Naive thymus-derived CD4-positive, alpha-beta T cell (primary cell): ENCODE measurements at regions of chr1 and their contacts with region 1.

Region 1: GRCh38 chr1:18902523-18903290 is at the start of gene ALDH4A1:
- DNase-seq: peak; percentile 73 to 95 (median 93)
- ATAC-seq: peak; percentile 98
- H3K4me3 ChIP-seq: peak within 1 kb of the TSS; percentile 57
- H3K4me3 Mint-ChIP-seq: peak within 1 kb of the TSS; percentile 86 to 99 (median 94)
- H3K27ac ChIP-seq: peak within 1 kb of the TSS; percentile 83
- H3K27ac Mint-ChIP-seq: peak within 1 kb of the TSS; percentile 88 to 98 (median 97)
- H3K4me1 ChIP-seq: peaks cover 3 to 12% of the 10 kb centered on the region in 2 donors
- H3K4me1 Mint-ChIP-seq: peaks cover 22 to 50% (median 41%) of the 10 kb centered on the region in 7 donors
- H3K27me3 ChIP-seq: no peaks in the 10 kb centered on the region
- H3K27me3 Mint-ChIP-seq: no peaks in the 10 kb centered on the region
- total RNA-seq, gene ALDH4A1: 1.3 to 3.2 (median 1.6) TPM

Region 2: GRCh38 chr1:18836654-18837053 is 66.1 kb before region 1 on chr1:
- CTCF ChIA-PET with region 1: no interaction called
- POLR2A ChIA-PET with region 1: no interaction called
- intact Hi-C with region 1: no loop called
- DNase-seq: no peak
- ATAC-seq: no peak
- H3K4me3 ChIP-seq: no peak overlapping the region
- H3K4me3 Mint-ChIP-seq: no peak overlapping the region
- H3K27ac ChIP-seq: no peak overlapping the region
- H3K27ac Mint-ChIP-seq: no peak overlapping the region
- H3K4me1 ChIP-seq: no peaks in the 10 kb centered on the region
- H3K4me1 Mint-ChIP-seq: no peaks in the 10 kb centered on the region
- H3K27me3 ChIP-seq: no peaks in the 10 kb centered on the region
- H3K27me3 Mint-ChIP-seq: peaks cover 0 to 34% (median 23%) of the 10 kb centered on the region in 5 donors

Region 3: DNA sequence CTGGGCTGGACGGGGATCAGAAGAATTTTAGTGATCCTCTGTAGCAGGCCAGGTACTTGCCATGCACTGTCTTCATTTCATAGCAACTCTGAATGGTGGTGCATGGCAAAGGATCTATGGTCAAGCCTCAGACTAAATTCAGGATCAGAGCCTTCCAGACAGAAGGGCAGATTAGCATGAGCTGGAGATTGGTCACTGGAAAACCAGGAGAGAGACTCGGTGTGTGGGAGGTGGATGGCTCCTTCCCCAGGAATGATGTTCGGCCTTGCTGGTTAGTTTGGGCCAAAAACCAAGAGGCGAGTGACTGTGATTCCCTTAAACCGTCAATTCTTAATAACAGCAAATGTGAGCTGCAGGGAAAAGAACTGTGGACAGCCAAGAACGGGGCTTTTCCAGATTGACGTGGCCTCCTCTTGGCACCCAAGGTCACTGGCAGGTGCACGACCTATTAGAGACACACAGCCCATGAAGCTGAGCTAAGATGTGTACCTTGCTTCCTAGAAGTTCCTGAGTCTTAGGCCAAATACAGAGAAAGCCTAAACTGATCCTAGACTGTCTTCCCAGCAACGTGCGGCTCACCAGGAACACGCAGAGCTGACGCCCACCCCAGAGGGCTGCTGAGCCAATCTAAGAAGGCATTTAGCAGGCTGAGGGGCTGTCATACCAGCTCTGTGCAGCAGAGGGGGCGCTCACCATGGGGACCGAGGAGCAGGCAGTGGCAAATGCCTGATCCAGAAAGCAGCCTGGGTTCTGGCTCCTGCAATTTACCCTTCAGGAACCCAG is 18.9 kb before region 1 on chr1:
- CTCF ChIA-PET with region 1: interaction called, 10 read pairs
- POLR2A ChIA-PET with region 1: no interaction called
- intact Hi-C with region 1: loop called in 1 of 2 experiments (anchors 1 kb)
- DNase-seq: peak; percentile 40 to 70 (median 57)
- ATAC-seq: peak; percentile 85
- H3K4me3 ChIP-seq: no peak overlapping the region
- H3K4me3 Mint-ChIP-seq: no peak overlapping the region
- H3K27ac ChIP-seq: no peak overlapping the region
- H3K27ac Mint-ChIP-seq: no peak overlapping the region
- H3K4me1 ChIP-seq: no peaks in the 10 kb centered on the region
- H3K4me1 Mint-ChIP-seq: no peaks in the 10 kb centered on the region
- H3K27me3 ChIP-seq: no peaks in the 10 kb centered on the region
- H3K27me3 Mint-ChIP-seq: no peaks in the 10 kb centered on the region

Region 4: GRCh38 chr1:18956369-18957135 is 53.8 kb after region 1 on chr1 and contains the start of gene IFFO2:
- CTCF ChIA-PET with region 1: interaction called, 14 read pairs
- POLR2A ChIA-PET with region 1: interaction called, 5 read pairs
- intact Hi-C with region 1: loop called (anchors 1 kb)
- DNase-seq: peak; percentile 95 to 100 (median 97)
- ATAC-seq: peak; percentile 90
- H3K4me3 ChIP-seq: peak within 1 kb of the TSS; percentile 66
- H3K4me3 Mint-ChIP-seq: peak within 1 kb of the TSS; percentile 89 to 96 (median 93)
- H3K27ac ChIP-seq: peak within 1 kb of the TSS; percentile 98
- H3K27ac Mint-ChIP-seq: peak within 1 kb of the TSS; percentile 37 to 99 (median 92)
- H3K4me1 ChIP-seq: peaks cover 51 to 52% of the 10 kb centered on the region in 2 donors
- H3K4me1 Mint-ChIP-seq: peaks cover 47 to 58% (median 52%) of the 10 kb centered on the region in 7 donors
- H3K27me3 ChIP-seq: no peaks in the 10 kb centered on the region
- H3K27me3 Mint-ChIP-seq: peaks cover 0 to 28% (median 0%) of the 10 kb centered on the region in 5 donors
- total RNA-seq, gene IFFO2: 20.5 to 57.1 (median 28.2) TPM

Region 5: GRCh38 chr1:19074902-19075721 is 172.4 kb after region 1 on chr1:
- CTCF ChIA-PET with region 1: interaction called, 5 read pairs
- POLR2A ChIA-PET with region 1: interaction called, 9 read pairs
- intact Hi-C with region 1: loop called in 1 of 2 experiments (anchors 1 kb)
- DNase-seq: peak in 1 of 9 donors; percentile 10
- ATAC-seq: peak; percentile 19
- H3K4me3 ChIP-seq: peak overlapping the region; percentile 41
- H3K4me3 Mint-ChIP-seq: peak overlapping the region; percentile 45 to 82 (median 72)
- H3K27ac ChIP-seq: peak overlapping the region; percentile 18
- H3K27ac Mint-ChIP-seq: peak overlapping the region; percentile 32 to 93 (median 76)
- H3K4me1 ChIP-seq: peaks cover 32 to 52% of the 10 kb centered on the region in 2 donors
- H3K4me1 Mint-ChIP-seq: peaks cover 30 to 69% (median 60%) of the 10 kb centered on the region in 7 donors
- H3K27me3 ChIP-seq: no peaks in the 10 kb centered on the region
- H3K27me3 Mint-ChIP-seq: no peaks in the 10 kb centered on the region

Region 6: DNA sequence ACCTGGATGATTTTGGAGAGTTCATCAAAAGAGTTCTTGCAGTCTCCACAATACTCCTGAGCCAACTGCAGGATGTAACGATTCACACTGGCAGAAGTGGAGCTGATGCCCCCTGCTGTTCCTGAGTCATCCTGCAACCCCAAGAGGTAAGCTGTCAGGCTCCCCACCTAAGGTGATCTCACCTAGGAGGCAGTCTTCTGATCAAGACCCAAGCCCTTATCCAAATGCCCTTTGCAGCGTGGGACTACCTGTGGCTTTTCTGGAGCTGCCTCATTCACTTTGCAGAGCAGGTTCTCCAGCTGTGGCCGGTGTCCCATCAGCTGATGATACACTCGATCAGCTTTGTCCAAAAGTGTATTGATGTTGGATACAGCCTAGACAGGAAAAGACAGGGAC is 211.0 kb after region 1 on chr1:
- CTCF ChIA-PET with region 1: interaction called, 5 read pairs
- POLR2A ChIA-PET with region 1: no interaction called
- intact Hi-C with region 1: loop called (anchors 1 kb)
- DNase-seq: peak in 6 of 9 donors; percentile 10 to 40 (median 30)
- ATAC-seq: peak; percentile 61
- H3K4me3 ChIP-seq: no peak overlapping the region
- H3K4me3 Mint-ChIP-seq: no peak overlapping the region
- H3K27ac ChIP-seq: no peak overlapping the region
- H3K27ac Mint-ChIP-seq: no peak overlapping the region
- H3K4me1 ChIP-seq: no peaks in the 10 kb centered on the region
- H3K4me1 Mint-ChIP-seq: peaks cover 0 to 5% (median 0%) of the 10 kb centered on the region in 7 donors
- H3K27me3 ChIP-seq: no peaks in the 10 kb centered on the region
- H3K27me3 Mint-ChIP-seq: no peaks in the 10 kb centered on the region

Region 7: GRCh38 chr1:19251305-19252196 is 348.8 kb after region 1 on chr1 and contains the starts of genes EMC1 and MRTO4:
- CTCF ChIA-PET with region 1: no interaction called
- POLR2A ChIA-PET with region 1: no interaction called
- intact Hi-C with region 1: loop called in 1 of 2 experiments (anchors 2 kb)
- DNase-seq: peak; percentile 83 to 96 (median 92)
- ATAC-seq: peak; percentile 97
- H3K4me3 ChIP-seq: peak within 1 kb of the TSS; percentile 92
- H3K4me3 Mint-ChIP-seq: peak within 1 kb of the TSS; percentile 91 to 98 (median 96)
- H3K27ac ChIP-seq: peak within 1 kb of the TSS; percentile 91
- H3K27ac Mint-ChIP-seq: peak within 1 kb of the TSS; percentile 91 to 97 (median 95)
- H3K4me1 ChIP-seq: peaks cover 26 to 30% of the 10 kb centered on the region in 2 donors
- H3K4me1 Mint-ChIP-seq: peaks cover 20 to 46% (median 29%) of the 10 kb centered on the region in 7 donors
- H3K27me3 ChIP-seq: no peaks in the 10 kb centered on the region
- H3K27me3 Mint-ChIP-seq: no peaks in the 10 kb centered on the region
- total RNA-seq, gene EMC1: 29.8 to 43.7 (median 37.1) TPM
- total RNA-seq, gene MRTO4: 17.1 to 42.3 (median 22.4) TPM

Region 8: DNA sequence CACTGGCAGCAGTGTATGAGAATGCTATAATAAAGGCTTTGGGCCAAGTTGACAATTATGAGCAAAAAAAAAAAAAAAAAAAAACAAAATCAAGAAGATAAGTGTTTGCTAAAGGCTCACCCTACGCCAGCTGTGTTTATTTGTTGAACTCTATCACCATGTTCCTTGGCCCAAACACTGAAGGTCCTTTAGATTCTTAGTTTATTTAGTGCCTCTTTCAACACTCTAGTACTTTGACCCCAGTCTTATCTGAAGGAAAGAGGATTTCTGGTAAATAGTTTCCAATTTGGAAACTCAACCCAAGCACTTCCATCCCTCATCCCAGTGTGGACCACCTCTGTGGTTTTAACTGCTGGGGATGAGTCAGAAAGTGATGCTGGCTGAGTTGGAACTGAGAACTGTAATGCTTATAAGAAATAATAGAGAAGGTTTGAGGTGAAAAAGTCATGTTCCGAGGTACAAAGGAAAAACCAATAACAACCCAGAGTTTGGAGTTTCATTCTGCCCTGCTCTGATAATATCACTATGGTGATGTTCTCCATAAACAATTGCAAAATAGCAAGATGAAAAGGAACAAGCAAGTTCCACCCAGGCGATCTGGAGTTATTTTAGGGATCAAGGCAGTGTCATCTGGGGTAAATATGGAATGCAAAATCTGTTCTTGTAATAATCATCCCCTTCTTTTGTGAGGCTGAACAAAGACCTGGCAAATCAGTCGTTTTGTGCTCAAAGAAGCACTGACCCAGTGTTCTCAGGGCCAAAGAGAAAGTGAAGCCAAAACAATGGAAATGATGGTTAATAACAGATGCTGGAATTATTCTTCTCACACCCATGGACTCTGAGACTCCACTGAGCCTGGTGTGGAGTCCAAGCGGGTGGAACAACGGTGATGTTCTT is 602.3 kb after region 1 on chr1:
- CTCF ChIA-PET with region 1: no interaction called
- POLR2A ChIA-PET with region 1: no interaction called
- intact Hi-C with region 1: no loop called
- DNase-seq: no peak
- ATAC-seq: peak; percentile 22
- H3K4me3 ChIP-seq: no peak overlapping the region
- H3K4me3 Mint-ChIP-seq: no peak overlapping the region
- H3K27ac ChIP-seq: no peak overlapping the region
- H3K27ac Mint-ChIP-seq: no peak overlapping the region
- H3K4me1 ChIP-seq: peaks cover 0 to 4% of the 10 kb centered on the region in 2 donors
- H3K4me1 Mint-ChIP-seq: peaks cover 4 to 32% (median 10%) of the 10 kb centered on the region in 7 donors
- H3K27me3 ChIP-seq: no peaks in the 10 kb centered on the region
- H3K27me3 Mint-ChIP-seq: no peaks in the 10 kb centered on the region